Spleen (tissue), 13 donors: ENCODE measurements at regions of chr12 and their contacts with region 1.

Region 1: DNA sequence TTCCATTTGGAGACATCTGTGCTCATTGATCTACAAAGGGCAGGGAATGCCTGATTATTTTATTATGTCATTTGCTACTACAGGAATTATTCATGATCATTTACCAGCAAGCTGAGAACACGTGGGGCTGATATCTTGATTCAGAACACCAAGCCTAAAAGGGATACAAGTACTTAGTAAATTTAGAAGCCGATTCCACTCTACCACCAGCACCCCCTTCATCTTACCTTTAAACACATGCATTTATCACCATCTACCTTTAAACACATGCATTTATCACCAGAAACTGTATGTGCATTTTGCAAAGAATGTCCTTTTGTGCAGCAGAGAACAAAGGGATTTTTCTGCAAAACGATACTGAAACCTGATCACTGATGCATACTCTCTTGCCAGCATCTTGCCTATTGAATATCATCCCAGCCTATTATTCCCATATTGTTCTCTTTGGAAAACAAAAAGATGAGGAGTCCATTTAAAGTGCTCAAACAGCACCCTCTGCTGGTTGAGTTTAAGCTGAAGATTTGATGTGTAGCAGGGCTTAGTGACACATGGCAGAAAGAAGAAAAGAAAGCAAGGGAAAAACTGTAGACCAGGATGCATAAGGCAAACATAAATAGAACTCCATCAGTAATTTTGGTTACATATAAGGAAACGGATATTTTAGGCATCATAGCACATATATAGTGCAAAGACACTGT is 132.6 kb upstream of the PLEKHG7 start:
- DNase-seq: no peak
- H3K4me3 ChIP-seq: peak overlapping the region in 5 of 8 donors; percentile 7 to 55 (median 15)
- H3K27ac ChIP-seq: peak overlapping the region in 7 of 8 donors; percentile 13 to 81 (median 60)
- H3K4me1 ChIP-seq: peaks cover 4 to 35% (median 29%) of the 10 kb centered on the region in 6 donors
- H3K27me3 ChIP-seq: no peaks in the 10 kb centered on the region
- CTCF ChIP-seq: peak; percentile 68 to 97 (median 84)
- POLR2A ChIP-seq: no peak

Region 2: GRCh38 chr12:91577586-91578539 is 992.3 kb before region 1 on chr12:
- intact Hi-C with region 1: loop called (anchors 10 kb)
- DNase-seq: no peak
- H3K4me3 ChIP-seq: peak overlapping the region in 4 of 8 donors; percentile 0 to 46 (median 18)
- H3K27ac ChIP-seq: no peak overlapping the region
- H3K4me1 ChIP-seq: peaks cover 0 to 17% (median 10%) of the 10 kb centered on the region in 6 donors
- H3K27me3 ChIP-seq: no peaks in the 10 kb centered on the region
- CTCF ChIP-seq: peak; percentile 39 to 78 (median 69)
- POLR2A ChIP-seq: no peak

Region 3: DNA sequence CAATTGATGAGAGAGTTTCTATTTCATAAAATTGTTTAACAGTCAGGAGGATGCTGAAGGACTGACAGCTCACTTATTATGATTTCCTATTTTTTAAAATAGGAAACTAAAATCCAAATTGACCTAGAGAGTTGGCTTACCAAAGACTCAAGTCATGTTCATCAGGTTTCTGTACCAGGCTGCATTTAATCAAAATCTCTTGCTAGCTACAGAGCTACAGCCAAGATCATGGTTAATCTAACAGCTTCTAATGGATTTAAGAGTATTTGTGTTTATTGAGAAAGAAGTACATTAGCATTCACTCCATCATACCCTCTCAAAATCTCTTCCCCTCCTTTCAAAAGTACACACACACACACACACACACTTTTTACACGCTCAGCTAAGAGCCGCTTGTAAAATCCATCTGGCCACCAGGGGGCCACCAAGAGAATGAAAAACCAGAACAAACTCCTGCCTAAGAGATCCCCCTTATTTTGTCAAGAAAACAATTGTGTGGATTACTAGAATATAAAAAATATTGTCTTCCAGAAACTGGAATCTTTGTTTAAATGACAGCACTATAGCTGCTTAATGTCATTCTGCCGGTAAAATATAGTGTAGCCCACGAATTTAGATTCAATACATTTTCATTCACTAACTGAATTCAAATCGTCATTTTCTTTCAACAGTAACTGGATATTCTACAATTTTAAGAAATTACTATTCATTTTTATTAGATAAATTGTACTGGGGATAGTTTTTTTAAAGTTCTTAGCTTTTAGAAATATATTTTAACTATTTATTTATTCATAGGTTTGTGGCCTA is 758.5 kb before region 1 on chr12:
- intact Hi-C with region 1: loop called (anchors 10 kb)
- DNase-seq: peak; percentile 85
- H3K4me3 ChIP-seq: no peak overlapping the region
- H3K27ac ChIP-seq: peak overlapping the region in 4 of 8 donors; percentile 4 to 38 (median 35)
- H3K4me1 ChIP-seq: peaks cover 0 to 16% (median 8%) of the 10 kb centered on the region in 6 donors
- H3K27me3 ChIP-seq: no peaks in the 10 kb centered on the region
- CTCF ChIP-seq: peak; percentile 54 to 90 (median 82)
- POLR2A ChIP-seq: no peak

Region 4: DNA sequence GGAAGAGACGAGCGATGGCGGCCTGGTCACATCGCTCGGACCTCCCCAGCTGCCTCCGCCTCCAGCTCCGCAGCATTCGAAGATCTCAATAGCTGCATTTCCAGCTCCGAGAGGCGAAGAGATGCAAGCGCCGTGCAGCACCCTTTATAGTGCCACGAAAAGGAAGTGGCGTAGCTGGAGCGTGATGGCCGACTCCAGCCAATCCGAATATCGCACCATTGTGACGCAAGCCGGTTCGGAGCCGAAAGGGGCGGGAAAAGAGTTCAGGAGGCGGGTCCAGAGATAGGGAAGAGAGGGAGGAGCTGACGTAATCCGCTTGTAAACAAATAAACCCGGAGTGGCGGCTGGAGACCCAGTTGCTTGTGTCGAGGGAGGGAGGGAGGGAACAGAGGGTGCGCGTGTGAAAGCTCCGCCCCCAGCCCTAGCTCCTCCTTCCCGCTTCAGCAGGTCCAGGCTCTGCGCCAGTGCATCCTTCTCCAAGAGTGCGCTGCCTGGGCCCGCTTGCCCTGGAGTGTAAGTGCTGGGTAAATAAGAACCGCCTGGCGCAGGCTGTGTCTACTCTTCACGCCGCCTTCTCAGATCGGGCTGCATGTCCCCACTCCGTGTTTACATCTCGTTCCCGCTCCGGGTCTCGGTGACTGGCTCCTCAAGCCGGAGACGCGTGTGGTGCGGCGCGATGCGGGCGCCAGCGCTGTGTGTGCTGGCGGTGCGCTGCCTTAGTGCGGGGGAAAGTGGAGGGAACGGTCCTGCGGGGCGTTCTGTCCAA is 424.3 kb before region 1 on chr12 and contains the start of gene BTG1:
- intact Hi-C with region 1: loop called (anchors 5 kb)
- DNase-seq: peak; percentile 99
- H3K4me3 ChIP-seq: peak within 1 kb of the TSS; percentile 40 to 90 (median 77)
- H3K27ac ChIP-seq: peak within 1 kb of the TSS; percentile 97 to 100 (median 100)
- H3K4me1 ChIP-seq: peaks cover 0 to 51% (median 24%) of the 10 kb centered on the region in 6 donors
- H3K27me3 ChIP-seq: no peaks in the 10 kb centered on the region
- CTCF ChIP-seq: peak in 2 of 11 experiments; percentile 7 to 31
- POLR2A ChIP-seq: peak; percentile 99 to 100 (median 100)
- total RNA-seq, gene BTG1: 171 to 358 (median 256) TPM

Region 5: DNA sequence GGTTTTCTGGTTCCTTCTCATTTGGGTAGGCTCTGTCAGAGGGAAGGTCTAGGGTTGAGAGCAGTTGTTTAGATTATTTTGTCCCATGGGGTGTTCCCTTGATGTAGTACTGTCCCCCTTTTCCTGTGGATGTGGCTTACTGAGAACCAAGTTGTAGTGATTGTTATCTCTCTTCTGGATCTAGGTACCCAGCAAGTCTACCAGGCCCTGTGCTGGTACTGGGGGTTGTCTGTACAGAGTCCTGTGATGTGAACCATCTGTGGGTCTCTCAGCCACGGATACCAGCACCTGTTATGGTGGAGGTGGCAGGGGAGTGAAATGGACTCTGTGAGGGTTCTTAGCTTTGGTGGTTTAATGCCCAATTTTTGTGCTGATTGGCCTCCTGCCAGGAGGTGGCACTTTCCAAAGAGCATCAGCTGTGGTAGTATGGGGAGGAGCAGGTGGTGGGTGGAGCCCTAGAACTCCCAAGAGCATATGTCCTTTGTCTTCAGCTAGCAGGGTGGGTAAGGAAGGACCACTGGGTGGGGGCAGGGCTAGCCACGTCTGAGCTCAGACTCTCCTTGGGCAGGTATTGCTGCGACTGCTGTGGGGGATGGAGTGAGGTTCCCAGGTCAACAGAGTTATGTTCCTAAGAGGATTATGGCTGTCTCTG is 245.2 kb before region 1 on chr12:
- intact Hi-C with region 1: no loop called
- DNase-seq: no peak
- H3K4me3 ChIP-seq: no peak overlapping the region
- H3K27ac ChIP-seq: no peak overlapping the region
- H3K4me1 ChIP-seq: no peaks in the 10 kb centered on the region
- H3K27me3 ChIP-seq: no peaks in the 10 kb centered on the region
- CTCF ChIP-seq: no peak
- POLR2A ChIP-seq: no peak